ENCODE measurements at regions of chr17 and their contacts with region 1.

Region 1: GRCh38 chr17:11144358-11145233 is 96.4 kb upstream of the SHISA6 start:
- DNase-seq: peak; percentile 46
- H3K4me3 Mint-ChIP-seq: no peak overlapping the region
- H3K27ac Mint-ChIP-seq: no peak overlapping the region
- H3K4me1 Mint-ChIP-seq: peaks cover 14% of the 10 kb centered on the region
- H3K27me3 Mint-ChIP-seq: no peaks in the 10 kb centered on the region
- CTCF ChIP-seq: peak; percentile 74

Region 2: GRCh38 chr17:11742886-11743285 is 598.3 kb after region 1 on chr17:
- CTCF ChIA-PET with region 1: interaction called, 4 read pairs
- POLR2A ChIA-PET with region 1: no interaction called
- intact Hi-C with region 1: loop called (anchors 10 kb)
- DNase-seq: no peak
- H3K4me3 Mint-ChIP-seq: no peak overlapping the region
- H3K27ac Mint-ChIP-seq: no peak overlapping the region
- H3K4me1 Mint-ChIP-seq: peaks cover 12% of the 10 kb centered on the region
- H3K27me3 Mint-ChIP-seq: no peaks in the 10 kb centered on the region
- CTCF ChIP-seq: no peak